HCT116 (cell line): ENCODE measurements at regions of chr19 and their contacts with region 1.

Region 1: GRCh38 chr19:48795055-48795684 is 15.7 kb downstream of the BCAT2 start:
- DNase-seq: peak; percentile 81
- ATAC-seq: peak; percentile 99
- H3K4me3 ChIP-seq: peak overlapping the region; percentile 10 to 27; a peak in 3 of 4 replicates
- H3K27ac ChIP-seq: peak overlapping the region; percentile 41
- H3K4me1 ChIP-seq: peaks cover 0 to 11% of the 10 kb centered on the region in 2 experiments; a peak in 1 of 4 replicates
- H3K27me3 ChIP-seq: no peaks in the 10 kb centered on the region
- CTCF ChIP-seq: peak; percentile 93 to 96 (median 93)
- POLR2A ChIP-seq: no peak
- RAD21 ChIP-seq: peak; percentile 99

Region 2: DNA sequence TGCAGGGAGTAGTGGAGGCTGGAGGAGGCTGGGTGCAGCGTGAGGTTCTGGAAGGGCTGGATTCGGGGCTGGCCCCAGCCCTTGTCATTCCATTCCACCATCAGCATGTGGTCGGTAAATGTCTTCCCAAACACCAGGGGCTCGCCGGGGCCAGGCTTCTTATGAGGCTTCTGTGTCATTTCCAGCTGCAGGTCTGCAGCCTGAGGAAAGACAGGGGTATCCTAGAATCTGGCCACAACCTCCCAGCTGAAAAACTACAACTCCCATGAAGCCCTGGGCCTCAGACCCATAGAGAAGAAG is 11.3 kb after region 1 on chr19:
- CTCF ChIA-PET with region 1: interaction called, 13 read pairs
- POLR2A ChIA-PET with region 1: interaction called, 4 read pairs
- RAD21 ChIA-PET with region 1: interaction called in 1 of 2 experiments, 3 read pairs
- intact Hi-C with region 1: no loop called
- DNase-seq: no peak
- ATAC-seq: no peak; the same call in 1 of the 2 replicates
- H3K4me3 ChIP-seq: no peak overlapping the region
- H3K27ac ChIP-seq: no peak overlapping the region
- H3K4me1 ChIP-seq: peaks cover 4 to 14% of the 10 kb centered on the region in 2 experiments; a peak in 2 of 4 replicates
- H3K27me3 ChIP-seq: no peaks in the 10 kb centered on the region
- CTCF ChIP-seq: no peak
- POLR2A ChIP-seq: no peak
- RAD21 ChIP-seq: no peak

Region 3: GRCh38 chr19:48970923-48971395 is 175.8 kb after region 1 on chr19:
- CTCF ChIA-PET with region 1: interaction called, 26 read pairs
- POLR2A ChIA-PET with region 1: no interaction called
- RAD21 ChIA-PET with region 1: interaction called in 1 of 2 experiments, 4 read pairs
- intact Hi-C with region 1: no loop called
- DNase-seq: no peak
- ATAC-seq: peak; percentile 71
- H3K4me3 ChIP-seq: no peak overlapping the region
- H3K27ac ChIP-seq: no peak overlapping the region
- H3K4me1 ChIP-seq: peaks cover 0 to 22% of the 10 kb centered on the region in 2 experiments; a peak in 3 of 4 replicates
- H3K27me3 ChIP-seq: no peaks in the 10 kb centered on the region
- CTCF ChIP-seq: peak in 2 of 3 experiments; percentile 94 to 95; a peak in 4 of 6 replicates
- POLR2A ChIP-seq: no peak
- RAD21 ChIP-seq: peak; percentile 88

Region 4: GRCh38 chr19:49004133-49004532 is 209.0 kb after region 1 on chr19:
- CTCF ChIA-PET with region 1: no interaction called
- POLR2A ChIA-PET with region 1: no interaction called
- RAD21 ChIA-PET with region 1: no interaction called
- intact Hi-C with region 1: no loop called
- DNase-seq: no peak
- ATAC-seq: no peak
- H3K4me3 ChIP-seq: no peak overlapping the region
- H3K27ac ChIP-seq: no peak overlapping the region
- H3K4me1 ChIP-seq: no peaks in the 10 kb centered on the region
- H3K27me3 ChIP-seq: no peaks in the 10 kb centered on the region
- CTCF ChIP-seq: no peak
- POLR2A ChIP-seq: no peak
- RAD21 ChIP-seq: no peak